Panc1 (cell line): ENCODE measurements at regions of chrX and their contacts with region 1.

Region 1: DNA sequence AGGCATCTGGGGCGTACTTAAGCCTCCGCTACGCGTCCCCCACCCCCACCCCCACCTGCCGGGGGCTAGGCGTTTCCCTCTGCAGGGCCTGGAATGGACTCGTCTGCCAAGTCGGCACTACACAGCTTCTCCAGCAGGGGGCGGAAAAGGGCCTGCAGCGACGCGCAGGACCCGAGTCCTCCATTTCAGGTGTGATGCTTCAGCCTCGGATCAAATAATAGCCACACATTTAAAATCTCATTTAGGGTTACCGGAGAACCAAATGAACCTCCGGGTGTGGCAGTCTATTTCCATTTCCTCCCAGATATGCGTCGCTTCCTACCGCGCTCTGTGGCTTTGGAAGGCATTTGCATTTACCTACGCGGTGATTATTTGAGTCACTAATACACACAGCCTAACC is 2.9 kb downstream of the PAK3 start:
- DNase-seq: peak; percentile 41
- ATAC-seq: peak; percentile 68
- H3K4me3 ChIP-seq: no peak overlapping the region
- H3K27ac ChIP-seq: no peak overlapping the region
- H3K4me1 ChIP-seq: peaks cover 10% of the 10 kb centered on the region; the same call in 1 of the 2 replicates
- H3K27me3 ChIP-seq: peaks cover 4% of the 10 kb centered on the region; the same call in 1 of the 2 replicates
- CTCF ChIP-seq: peak; percentile 87

Region 2: GRCh38 chrX:110450050-110450449 is 648.8 kb before region 1 on chrX:
- CTCF ChIA-PET with region 1: no interaction called
- POLR2A ChIA-PET with region 1: no interaction called
- in situ Hi-C with region 1: no loop called
- intact Hi-C with region 1: loop called (anchors 10 kb)
- DNase-seq: peak; percentile 45
- ATAC-seq: peak; percentile 95
- H3K4me3 ChIP-seq: no peak overlapping the region
- H3K27ac ChIP-seq: no peak overlapping the region
- H3K4me1 ChIP-seq: no peaks in the 10 kb centered on the region
- H3K27me3 ChIP-seq: peaks cover 12% of the 10 kb centered on the region
- CTCF ChIP-seq: peak; percentile 81

Region 3: DNA sequence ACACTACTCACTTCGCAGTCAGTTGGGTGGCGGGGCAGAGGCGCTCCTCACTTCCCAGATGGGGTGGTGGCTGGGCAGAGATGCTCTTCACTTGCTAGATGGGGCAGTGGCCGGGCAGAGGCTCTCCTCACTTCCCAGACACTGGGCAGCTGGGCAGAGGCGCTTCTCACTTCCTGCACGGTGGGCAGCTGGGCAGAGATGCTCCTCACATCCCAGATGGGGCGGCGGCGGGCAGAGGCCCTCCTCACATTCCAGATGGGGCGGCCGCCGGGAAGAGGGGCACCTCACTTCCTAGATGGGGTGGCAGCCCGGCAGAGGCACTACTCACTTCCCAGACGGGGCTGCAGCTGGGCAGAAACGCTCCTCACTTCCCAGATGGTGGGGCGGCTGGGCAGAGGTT is 540.5 kb before region 1 on chrX:
- CTCF ChIA-PET with region 1: no interaction called
- POLR2A ChIA-PET with region 1: interaction called, 10 read pairs
- in situ Hi-C with region 1: no loop called
- intact Hi-C with region 1: no loop called
- DNase-seq: no peak
- ATAC-seq: no peak
- H3K4me3 ChIP-seq: no peak overlapping the region
- H3K27ac ChIP-seq: no peak overlapping the region
- H3K4me1 ChIP-seq: no peaks in the 10 kb centered on the region
- H3K27me3 ChIP-seq: no peaks in the 10 kb centered on the region
- CTCF ChIP-seq: no peak

Region 4: DNA sequence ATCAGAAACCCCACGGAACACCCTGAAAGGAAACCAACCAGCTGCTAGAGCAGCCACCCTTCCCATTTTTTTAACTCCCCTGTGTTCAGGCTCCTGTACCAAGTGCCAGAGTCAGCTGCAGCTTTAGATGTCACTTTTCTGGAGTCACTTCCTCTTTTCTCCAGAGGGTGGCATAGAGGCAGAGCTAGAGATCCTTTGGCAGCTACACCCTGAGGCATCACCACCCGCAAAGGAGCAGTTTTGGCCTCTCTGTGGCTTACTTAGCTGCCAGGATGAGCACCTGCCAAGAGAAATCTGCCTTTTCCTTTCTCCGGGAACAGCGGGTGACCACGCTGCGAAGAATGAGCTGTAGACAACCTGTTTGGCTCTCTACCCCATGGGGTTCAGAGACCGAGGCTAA is 245.3 kb before region 1 on chrX:
- CTCF ChIA-PET with region 1: no interaction called
- POLR2A ChIA-PET with region 1: no interaction called
- in situ Hi-C with region 1: no loop called
- intact Hi-C with region 1: loop called (anchors 10 kb)
- DNase-seq: no peak
- ATAC-seq: 0 out of 2 replicates have a peak, but pooled peaks have one; percentile 58
- H3K4me3 ChIP-seq: no peak overlapping the region
- H3K27ac ChIP-seq: no peak overlapping the region
- H3K4me1 ChIP-seq: no peaks in the 10 kb centered on the region
- H3K27me3 ChIP-seq: no peaks in the 10 kb centered on the region
- CTCF ChIP-seq: peak; percentile 34; the same call in 1 of the 2 replicates

Region 5: DNA sequence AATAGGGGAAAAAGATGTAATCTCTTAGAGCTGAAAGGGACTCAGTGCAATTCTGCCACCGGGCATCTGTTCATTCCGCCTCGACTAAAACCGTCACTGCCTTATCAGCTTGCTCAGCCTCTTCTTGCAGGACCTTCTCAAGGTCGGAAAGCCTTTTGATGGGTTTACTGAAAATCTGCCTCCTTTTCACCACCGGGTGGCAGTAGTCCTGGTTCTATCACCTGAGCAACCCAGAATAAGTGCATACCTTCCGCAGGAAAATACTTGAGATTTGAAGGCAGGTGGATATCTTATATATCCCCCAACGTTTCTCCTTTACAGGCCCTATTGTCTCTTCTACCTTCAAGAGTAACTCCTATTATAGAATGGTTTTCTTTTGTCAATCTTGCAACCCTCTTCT is 106.3 kb before region 1 on chrX:
- CTCF ChIA-PET with region 1: no interaction called
- POLR2A ChIA-PET with region 1: no interaction called
- in situ Hi-C with region 1: no loop called
- intact Hi-C with region 1: loop called (anchors 5 kb)
- DNase-seq: peak; percentile 13
- ATAC-seq: no peak
- H3K4me3 ChIP-seq: no peak overlapping the region
- H3K27ac ChIP-seq: no peak overlapping the region
- H3K4me1 ChIP-seq: no peaks in the 10 kb centered on the region
- H3K27me3 ChIP-seq: no peaks in the 10 kb centered on the region
- CTCF ChIP-seq: peak; percentile 61

Region 6: GRCh38 chrX:111244235-111244750 is 145.4 kb after region 1 on chrX:
- CTCF ChIA-PET with region 1: no interaction called
- POLR2A ChIA-PET with region 1: no interaction called
- in situ Hi-C with region 1: no loop called
- intact Hi-C with region 1: loop called (anchors 5 kb)
- DNase-seq: no peak
- ATAC-seq: no peak
- H3K4me3 ChIP-seq: no peak overlapping the region
- H3K27ac ChIP-seq: no peak overlapping the region
- H3K4me1 ChIP-seq: no peaks in the 10 kb centered on the region
- H3K27me3 ChIP-seq: no peaks in the 10 kb centered on the region; the same call in 1 of the 2 replicates
- CTCF ChIP-seq: peak; percentile 60; the same call in 1 of the 2 replicates

Region 7: GRCh38 chrX:111445486-111445885 is 346.6 kb after region 1 on chrX:
- CTCF ChIA-PET with region 1: no interaction called
- POLR2A ChIA-PET with region 1: no interaction called
- in situ Hi-C with region 1: no loop called
- intact Hi-C with region 1: loop called (anchors 10 kb)
- DNase-seq: peak; percentile 20
- ATAC-seq: no peak
- H3K4me3 ChIP-seq: no peak overlapping the region
- H3K27ac ChIP-seq: no peak overlapping the region
- H3K4me1 ChIP-seq: no peaks in the 10 kb centered on the region
- H3K27me3 ChIP-seq: no peaks in the 10 kb centered on the region; the same call in 1 of the 2 replicates
- CTCF ChIP-seq: peak; percentile 63; the same call in 1 of the 2 replicates